ENCODE measurements at regions of chr17 and their contacts with region 1.

Region 1: DNA sequence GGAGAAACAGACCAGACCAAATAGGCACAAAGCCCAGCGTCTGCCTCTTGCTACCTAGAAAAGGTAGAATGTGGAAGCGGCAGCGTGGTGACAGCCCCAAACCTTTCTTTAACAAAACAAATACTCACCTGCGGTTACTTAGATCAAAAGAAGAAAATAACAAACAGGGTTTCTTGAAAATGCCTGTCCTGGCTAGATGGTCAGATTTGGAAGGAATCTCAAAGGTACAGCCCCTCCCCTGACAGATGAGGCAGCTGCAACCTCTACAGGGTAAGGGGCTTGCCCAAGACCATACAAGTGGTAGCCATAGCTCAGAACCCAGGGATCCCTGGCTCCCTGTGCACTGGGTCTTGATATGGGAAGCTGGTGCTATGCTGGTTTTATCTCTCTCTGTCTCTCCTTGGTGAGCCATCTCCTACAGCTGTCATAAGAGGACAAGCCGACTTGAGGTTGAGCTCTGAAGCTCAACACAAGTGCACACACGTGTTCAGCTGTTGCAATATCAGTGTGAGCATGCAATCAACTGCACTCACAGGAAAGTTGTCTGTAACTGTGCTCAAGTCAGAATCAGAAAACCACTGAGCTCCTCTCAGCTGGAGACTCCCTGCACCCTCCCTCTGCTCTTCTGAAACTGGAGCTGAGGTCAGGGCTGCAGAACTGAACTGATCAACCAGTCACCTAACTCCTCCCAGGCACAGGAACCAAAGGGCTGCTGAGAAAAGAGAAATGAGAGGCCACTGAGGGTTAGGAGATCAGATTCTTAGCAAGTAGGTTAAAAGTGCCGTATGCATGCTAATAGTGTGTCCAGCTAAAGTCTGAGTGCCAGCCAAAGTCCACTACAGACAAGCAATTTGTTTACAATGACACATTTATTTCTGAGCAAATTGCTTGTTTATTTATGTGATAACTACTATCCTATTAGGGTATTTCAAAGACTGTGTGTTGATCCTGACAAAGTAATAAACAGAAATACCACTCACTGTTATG is 6.1 kb upstream of the RNF157 start:
- DNase-seq: peak; percentile 51
- H3K4me3 ChIP-seq: no peak overlapping the region
- H3K27ac ChIP-seq: no peak overlapping the region
- H3K4me1 ChIP-seq: peaks cover 9% of the 10 kb centered on the region
- CTCF ChIP-seq: no peak

Region 2: GRCh38 chr17:76208120-76208519 is 38.3 kb before region 1 on chr17:
- CTCF ChIA-PET with region 1: no interaction called
- POLR2A ChIA-PET with region 1: interaction called, 3 read pairs
- intact Hi-C with region 1: loop called (anchors 5 kb)
- DNase-seq: peak; percentile 78
- H3K4me3 ChIP-seq: no peak overlapping the region
- H3K27ac ChIP-seq: peak overlapping the region; percentile 33
- H3K4me1 ChIP-seq: peaks cover 16% of the 10 kb centered on the region
- CTCF ChIP-seq: no peak

Region 3: GRCh38 chr17:76271669-76272540 is 25.5 kb after region 1 on chr17:
- CTCF ChIA-PET with region 1: interaction called, 4 read pairs
- POLR2A ChIA-PET with region 1: interaction called, 8 read pairs
- intact Hi-C with region 1: loop called (anchors 1 kb)
- DNase-seq: peak; percentile 89
- H3K4me3 ChIP-seq: peak overlapping the region; percentile 61
- H3K27ac ChIP-seq: peak overlapping the region; percentile 85
- H3K4me1 ChIP-seq: peaks cover 84% of the 10 kb centered on the region
- CTCF ChIP-seq: no peak

Region 4: DNA sequence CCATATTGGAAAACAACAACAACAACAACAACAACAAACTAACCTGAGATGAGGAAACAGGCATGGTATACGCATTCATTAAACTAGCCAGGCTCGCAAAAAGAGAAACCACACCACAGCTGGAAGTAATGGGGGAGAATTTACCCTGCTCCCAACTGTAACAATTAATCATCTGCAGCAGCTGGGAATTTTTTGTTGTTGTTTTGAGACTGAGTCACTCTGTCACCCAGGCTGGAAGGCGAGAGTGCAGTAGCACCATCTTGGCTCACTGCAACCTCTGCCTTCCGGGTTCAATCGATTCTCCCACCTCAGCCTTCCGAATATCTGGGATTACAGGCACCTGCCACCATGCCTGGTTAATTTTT is 91.0 kb after region 1 on chr17:
- CTCF ChIA-PET with region 1: no interaction called
- POLR2A ChIA-PET with region 1: no interaction called
- intact Hi-C with region 1: no loop called
- DNase-seq: no peak
- H3K4me3 ChIP-seq: no peak overlapping the region
- H3K27ac ChIP-seq: no peak overlapping the region
- H3K4me1 ChIP-seq: no peaks in the 10 kb centered on the region
- CTCF ChIP-seq: no peak

Measured in OCI-LY7 (cell line).